ENCODE measurements at regions of chr3 and their contacts with region 1.

Region 1: GRCh38 chr3:182683453-182683852 is 109.9 kb upstream of the ATP11B start:
- DNase-seq: peak in 8 of 9 donors; percentile 14 to 61 (median 52)
- ATAC-seq: peak; percentile 83
- H3K4me3 ChIP-seq: no peak overlapping the region
- H3K4me3 Mint-ChIP-seq: peak overlapping the region; percentile 68 to 84 (median 74)
- H3K27ac ChIP-seq: no peak overlapping the region
- H3K27ac Mint-ChIP-seq: peak overlapping the region in 2 of 9 donors; percentile 1 to 3
- H3K4me1 ChIP-seq: peaks cover 0 to 6% of the 10 kb centered on the region in 2 donors
- H3K4me1 Mint-ChIP-seq: peaks cover 6 to 15% (median 10%) of the 10 kb centered on the region in 7 donors
- H3K27me3 ChIP-seq: peaks cover 0 to 6% of the 10 kb centered on the region in 2 donors
- H3K27me3 Mint-ChIP-seq: peaks cover 40 to 59% (median 51%) of the 10 kb centered on the region in 5 donors

Region 2: DNA sequence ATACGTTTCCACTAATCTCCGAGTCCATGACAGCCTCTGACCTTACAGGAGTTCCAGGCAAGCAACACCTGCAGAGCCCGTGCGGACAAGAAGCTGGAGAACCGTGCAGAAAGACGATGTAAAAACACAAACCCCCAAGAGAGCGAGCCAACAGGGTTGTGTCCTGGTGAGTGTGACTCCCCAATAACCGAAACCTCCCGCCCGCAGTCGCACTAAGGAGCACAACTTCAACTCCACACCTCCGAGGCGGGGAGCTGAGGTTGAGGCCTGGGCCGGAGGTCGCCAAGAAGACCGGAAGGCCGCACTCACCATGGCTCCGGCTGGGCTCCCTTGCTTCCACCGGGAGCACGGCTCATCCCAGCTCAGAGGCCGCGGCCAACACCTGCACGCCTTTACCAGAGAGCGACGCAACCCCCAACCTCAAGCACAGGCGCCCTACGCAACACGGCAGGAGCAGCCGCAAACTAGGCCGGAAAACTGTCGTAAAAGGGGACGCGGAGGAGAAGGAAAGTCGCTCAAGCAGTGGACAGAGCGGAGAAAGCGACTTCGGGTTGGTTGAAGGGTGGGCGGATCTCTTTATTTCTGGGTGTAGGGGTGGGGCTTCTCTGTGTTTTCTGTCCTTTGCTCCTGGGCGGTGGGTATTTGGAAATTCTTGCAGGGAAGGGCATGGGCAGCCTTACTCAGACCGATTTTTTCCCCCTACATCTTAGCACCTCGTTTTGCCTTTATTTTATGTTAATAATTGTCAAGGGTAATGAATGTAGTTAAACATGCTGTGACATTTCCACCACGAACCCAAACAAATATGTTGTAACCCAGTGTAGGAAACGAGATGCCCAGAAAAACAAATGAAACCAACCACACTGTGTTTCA is 1693.9 kb before region 1 on chr3 and contains the start of gene DNAJC19:
- CTCF ChIA-PET with region 1: no interaction called
- POLR2A ChIA-PET with region 1: no interaction called
- intact Hi-C with region 1: loop called in 1 of 2 experiments (anchors 10 kb)
- DNase-seq: peak; percentile 69 to 94 (median 93)
- ATAC-seq: peak; percentile 99
- H3K4me3 ChIP-seq: peak within 1 kb of the TSS; percentile 78
- H3K4me3 Mint-ChIP-seq: peak within 1 kb of the TSS; percentile 91 to 99 (median 97)
- H3K27ac ChIP-seq: peak within 1 kb of the TSS; percentile 80
- H3K27ac Mint-ChIP-seq: peak within 1 kb of the TSS; percentile 90 to 99 (median 96)
- H3K4me1 ChIP-seq: peaks cover 15 to 23% of the 10 kb centered on the region in 2 donors
- H3K4me1 Mint-ChIP-seq: peaks cover 15 to 58% (median 44%) of the 10 kb centered on the region in 7 donors
- H3K27me3 ChIP-seq: no peaks in the 10 kb centered on the region
- H3K27me3 Mint-ChIP-seq: peaks cover 0 to 7% (median 0%) of the 10 kb centered on the region in 5 donors
- total RNA-seq, gene DNAJC19: 20.7 to 74.1 (median 40.2) TPM

Region 3: GRCh38 chr3:181700168-181701087 is 983.0 kb before region 1 on chr3:
- CTCF ChIA-PET with region 1: interaction called, 5 read pairs
- POLR2A ChIA-PET with region 1: no interaction called
- intact Hi-C with region 1: loop called in 1 of 2 experiments (anchors 2 kb)
- DNase-seq: peak in 4 of 9 donors; percentile 29 to 56 (median 37)
- ATAC-seq: peak; percentile 70
- H3K4me3 ChIP-seq: peak overlapping the region; percentile 8
- H3K4me3 Mint-ChIP-seq: peak overlapping the region; percentile 20 to 81 (median 63)
- H3K27ac ChIP-seq: no peak overlapping the region
- H3K27ac Mint-ChIP-seq: peak overlapping the region in 1 of 9 donors; percentile 62
- H3K4me1 ChIP-seq: peaks cover 7 to 9% of the 10 kb centered on the region in 2 donors
- H3K4me1 Mint-ChIP-seq: peaks cover 6 to 40% (median 26%) of the 10 kb centered on the region in 7 donors
- H3K27me3 ChIP-seq: peaks cover 6 to 24% of the 10 kb centered on the region in 2 donors
- H3K27me3 Mint-ChIP-seq: peaks cover 86 to 94% (median 91%) of the 10 kb centered on the region in 5 donors

Region 4: DNA sequence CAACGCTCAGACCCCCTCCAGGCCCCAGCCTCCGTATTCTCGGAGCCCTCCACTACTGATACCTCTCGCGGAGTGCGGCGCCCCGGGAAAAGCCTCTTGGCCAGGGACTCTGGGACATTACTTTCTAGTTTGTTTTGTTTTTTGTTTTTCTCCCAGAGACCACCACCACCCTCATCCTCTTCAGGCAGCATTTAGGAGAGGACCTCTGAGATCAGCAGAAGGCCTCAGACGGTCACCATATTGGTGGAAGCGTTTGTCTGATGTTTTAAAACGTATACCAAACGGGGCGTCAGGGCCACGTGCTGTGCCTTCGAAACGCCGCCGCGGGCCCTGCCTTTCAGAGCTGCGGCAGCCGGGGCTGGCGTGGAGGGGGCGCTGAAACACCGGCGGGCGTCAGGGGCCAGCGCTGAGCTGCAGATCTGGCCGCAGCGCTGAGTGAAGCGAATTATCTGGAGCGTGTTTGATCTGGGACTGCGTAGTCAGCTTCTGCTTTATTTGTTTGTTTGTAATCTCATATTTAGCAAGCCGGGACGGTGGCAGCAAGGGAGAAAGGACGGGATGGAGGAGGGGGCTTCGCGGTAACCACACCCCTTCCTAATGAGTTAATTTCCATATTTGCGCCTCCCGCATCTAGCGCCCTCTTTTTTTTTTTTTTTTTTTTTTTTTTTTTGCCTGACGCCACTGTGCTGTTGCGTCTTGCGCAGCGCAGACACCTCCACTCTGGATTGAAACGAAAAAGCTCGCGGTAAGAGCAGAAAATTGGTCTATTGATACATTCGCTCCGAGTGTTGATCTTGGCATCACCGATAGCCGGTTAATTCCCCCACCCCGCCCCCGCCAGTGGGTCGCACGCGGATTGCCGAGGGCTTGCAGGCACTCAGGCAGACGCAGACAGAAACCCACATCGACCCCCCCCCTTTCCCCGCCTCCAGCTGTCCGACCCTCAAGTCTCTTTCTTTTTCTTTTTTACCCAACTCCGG is 956.8 kb before region 1 on chr3:
- CTCF ChIA-PET with region 1: no interaction called
- POLR2A ChIA-PET with region 1: no interaction called
- intact Hi-C with region 1: loop called in 1 of 2 experiments (anchors 5 kb)
- DNase-seq: no peak
- ATAC-seq: no peak
- H3K4me3 ChIP-seq: peak overlapping the region; percentile 45
- H3K4me3 Mint-ChIP-seq: peak overlapping the region; percentile 62 to 84 (median 80)
- H3K27ac ChIP-seq: no peak overlapping the region
- H3K27ac Mint-ChIP-seq: peak overlapping the region in 4 of 9 donors; percentile 20 to 73 (median 60)
- H3K4me1 ChIP-seq: peaks cover 0 to 3% of the 10 kb centered on the region in 2 donors
- H3K4me1 Mint-ChIP-seq: peaks cover 0 to 21% (median 17%) of the 10 kb centered on the region in 7 donors
- H3K27me3 ChIP-seq: peaks cover 16 to 38% of the 10 kb centered on the region in 2 donors
- H3K27me3 Mint-ChIP-seq: peaks cover 90 to 98% (median 94%) of the 10 kb centered on the region in 5 donors

Region 5: DNA sequence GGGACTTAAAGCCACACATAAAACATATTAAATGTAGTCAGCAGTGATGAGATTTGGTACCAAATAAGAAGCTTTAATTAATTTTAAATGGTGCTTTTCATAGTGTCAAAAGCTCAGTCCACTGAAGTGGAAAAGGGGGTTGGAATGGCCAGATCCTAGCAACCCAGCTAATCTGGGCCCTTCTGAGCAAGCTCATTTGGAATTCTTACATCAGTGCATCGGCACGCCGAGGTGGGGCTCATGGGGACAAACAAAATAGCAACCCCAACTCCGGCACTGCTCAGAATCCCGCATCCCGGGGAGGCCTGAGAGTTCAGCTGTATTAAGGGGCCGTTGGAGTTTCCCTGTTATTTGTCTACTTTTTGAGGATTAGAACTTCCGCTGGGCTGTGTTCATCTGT is 445.3 kb before region 1 on chr3:
- CTCF ChIA-PET with region 1: no interaction called
- POLR2A ChIA-PET with region 1: no interaction called
- intact Hi-C with region 1: no loop called
- DNase-seq: no peak
- ATAC-seq: no peak
- H3K4me3 ChIP-seq: no peak overlapping the region
- H3K4me3 Mint-ChIP-seq: no peak overlapping the region
- H3K27ac ChIP-seq: no peak overlapping the region
- H3K27ac Mint-ChIP-seq: no peak overlapping the region
- H3K4me1 ChIP-seq: no peaks in the 10 kb centered on the region
- H3K4me1 Mint-ChIP-seq: no peaks in the 10 kb centered on the region
- H3K27me3 ChIP-seq: no peaks in the 10 kb centered on the region
- H3K27me3 Mint-ChIP-seq: peaks cover 0 to 3% (median 0%) of the 10 kb centered on the region in 5 donors

Region 6: GRCh38 chr3:182392182-182392937 is 291.1 kb before region 1 on chr3:
- CTCF ChIA-PET with region 1: no interaction called
- POLR2A ChIA-PET with region 1: no interaction called
- intact Hi-C with region 1: loop called in 1 of 2 experiments (anchors 2 kb)
- DNase-seq: no peak
- ATAC-seq: no peak
- H3K4me3 ChIP-seq: no peak overlapping the region
- H3K4me3 Mint-ChIP-seq: no peak overlapping the region
- H3K27ac ChIP-seq: no peak overlapping the region
- H3K27ac Mint-ChIP-seq: no peak overlapping the region
- H3K4me1 ChIP-seq: no peaks in the 10 kb centered on the region
- H3K4me1 Mint-ChIP-seq: no peaks in the 10 kb centered on the region
- H3K27me3 ChIP-seq: no peaks in the 10 kb centered on the region
- H3K27me3 Mint-ChIP-seq: peaks cover 0 to 3% (median 0%) of the 10 kb centered on the region in 5 donors

Measured in naive thymus-derived CD4-positive, alpha-beta T cell (primary cell).